ENCODE measurements at regions of chr2 and their contacts with region 1.

Region 1: DNA sequence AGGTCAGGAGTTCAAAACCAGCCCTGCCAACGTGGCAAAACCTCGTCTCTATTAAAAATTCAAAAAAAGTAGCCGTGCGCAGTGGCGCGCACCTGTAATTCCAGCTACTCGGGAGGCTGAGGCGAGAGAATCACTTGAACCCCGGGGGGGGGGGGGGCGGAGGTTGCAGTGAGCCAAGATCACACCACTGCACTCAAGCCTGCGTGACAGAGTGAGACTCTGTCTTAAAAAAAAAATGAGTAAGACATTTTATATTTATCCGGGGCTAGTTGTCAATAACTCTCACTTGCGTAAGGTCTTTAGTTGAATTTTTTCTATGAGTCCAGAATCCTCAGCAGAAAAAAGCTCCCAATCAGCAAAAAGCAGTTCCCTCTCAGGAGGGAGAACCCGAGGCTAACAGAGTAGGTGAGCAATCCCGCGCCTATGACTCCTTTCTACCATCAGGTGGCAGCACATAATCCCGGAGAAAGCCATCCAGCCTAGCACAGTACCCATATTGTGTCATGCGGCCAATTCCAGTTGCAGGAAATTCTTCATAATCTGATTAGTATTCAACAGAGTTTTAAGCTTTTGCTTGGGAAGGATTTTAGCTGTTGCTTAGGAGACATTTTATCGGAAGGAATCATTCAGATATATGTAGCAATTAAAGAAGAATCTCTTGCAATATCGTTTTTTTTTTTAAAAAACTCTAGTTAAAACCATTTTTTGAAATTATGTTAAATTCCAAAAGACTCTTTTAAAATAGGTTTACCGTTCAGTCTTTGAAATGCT is 11.9 kb upstream of the CRYGA start:
- DNase-seq: peak; percentile 61 to 85 (median 66)
- ATAC-seq: peak; percentile 98
- H3K4me3 ChIP-seq: no peak overlapping the region
- H3K27ac ChIP-seq: no peak overlapping the region
- H3K4me1 ChIP-seq: peaks cover 6 to 18% of the 10 kb centered on the region in 2 experiments; a peak in 3 of 5 replicates
- H3K27me3 ChIP-seq: no peaks in the 10 kb centered on the region
- CTCF ChIP-seq: peak; percentile 75 to 83 (median 79)
- EP300 ChIP-seq: no peak
- POLR2A ChIP-seq: no peak
- RAD21 ChIP-seq: peak; percentile 62 to 68

Region 2: GRCh38 chr2:208101716-208102631 is 73.3 kb before region 1 on chr2:
- CTCF ChIA-PET with region 1: no interaction called
- POLR2A ChIA-PET with region 1: interaction called, 3 read pairs
- in situ Hi-C with region 1: no loop called
- intact Hi-C with region 1: loop called (anchors 2 kb)
- DNase-seq: peak in 2 of 4 experiments; percentile 9 to 13
- ATAC-seq: peak; percentile 79
- H3K4me3 ChIP-seq: no peak overlapping the region
- H3K27ac ChIP-seq: no peak overlapping the region
- H3K4me1 ChIP-seq: no peaks in the 10 kb centered on the region
- H3K27me3 ChIP-seq: 0 out of 5 replicates have a peak, but pooled peaks cover 0 to 4% of the 10 kb centered on the region in 2 experiments
- CTCF ChIP-seq: peak; percentile 14 to 62 (median 41); a peak in 5 of 6 replicates
- EP300 ChIP-seq: no peak
- POLR2A ChIP-seq: no peak
- RAD21 ChIP-seq: peak; percentile 56 to 64

Region 3: GRCh38 chr2:208254871-208255556 is 79.8 kb after region 1 on chr2 and contains the start of gene IDH1:
- CTCF ChIA-PET with region 1: interaction called, 3 read pairs
- POLR2A ChIA-PET with region 1: interaction called, 3 read pairs
- in situ Hi-C with region 1: no loop called
- intact Hi-C with region 1: loop called (anchors 1 kb)
- DNase-seq: peak; percentile 91 to 94 (median 92)
- ATAC-seq: peak; percentile 78
- H3K4me3 ChIP-seq: peak within 1 kb of the TSS; percentile 84
- H3K27ac ChIP-seq: peak within 1 kb of the TSS; percentile 80
- H3K4me1 ChIP-seq: peaks cover 8 to 13% of the 10 kb centered on the region in 2 experiments; a peak in 4 of 5 replicates
- H3K27me3 ChIP-seq: no peaks in the 10 kb centered on the region
- CTCF ChIP-seq: peak; percentile 59 to 66 (median 64)
- EP300 ChIP-seq: no peak
- POLR2A ChIP-seq: peak; percentile 65
- RAD21 ChIP-seq: peak; percentile 21 to 31; a peak in 3 of 4 replicates
- polyA plus RNA-seq, gene IDH1: 135 to 194 TPM

Region 4: GRCh38 chr2:208265801-208266552 is 90.7 kb after region 1 on chr2 and contains the start of gene PIKFYVE:
- CTCF ChIA-PET with region 1: no interaction called
- POLR2A ChIA-PET with region 1: no interaction called
- in situ Hi-C with region 1: no loop called
- intact Hi-C with region 1: loop called (anchors 1 kb)
- DNase-seq: peak; percentile 81 to 96 (median 90)
- ATAC-seq: peak; percentile 89
- H3K4me3 ChIP-seq: peak within 1 kb of the TSS; percentile 96
- H3K27ac ChIP-seq: peak within 1 kb of the TSS; percentile 77
- H3K4me1 ChIP-seq: peaks cover 4 to 7% of the 10 kb centered on the region in 2 experiments; a peak in 4 of 5 replicates
- H3K27me3 ChIP-seq: no peaks in the 10 kb centered on the region
- CTCF ChIP-seq: no peak
- EP300 ChIP-seq: peak; percentile 27
- POLR2A ChIP-seq: peak; percentile 79
- RAD21 ChIP-seq: no peak
- polyA plus RNA-seq, gene PIKFYVE: 3.6 to 3.7 TPM

Region 5: DNA sequence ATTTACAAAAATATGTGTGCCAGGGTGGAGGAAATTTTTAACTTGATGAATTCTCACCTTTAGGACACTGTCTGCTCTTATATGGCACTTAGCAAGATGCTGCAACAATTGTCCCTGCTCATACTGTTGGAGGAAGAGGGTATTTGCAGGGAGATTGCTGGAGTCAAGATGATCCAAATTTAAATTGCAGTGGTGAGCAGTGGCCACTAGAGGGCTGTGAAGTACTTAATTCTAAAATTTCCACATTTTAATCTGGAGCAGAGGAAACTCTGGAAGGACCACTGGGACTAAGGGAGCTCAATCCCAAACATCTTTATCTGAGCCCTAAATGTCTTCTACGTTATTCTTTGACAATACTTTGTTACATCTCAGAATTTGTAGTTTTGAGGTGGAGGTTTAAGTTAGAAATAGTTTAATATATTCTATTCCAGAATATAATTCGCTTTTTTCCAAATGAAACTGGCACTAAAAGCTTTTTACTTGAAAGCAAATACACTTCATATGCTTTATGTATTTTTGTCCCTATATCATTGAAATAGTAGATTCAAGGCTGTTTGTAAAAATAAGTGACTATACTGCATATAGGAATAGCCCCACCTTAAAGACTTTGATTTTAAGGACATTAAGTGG is 198.3 kb after region 1 on chr2:
- CTCF ChIA-PET with region 1: no interaction called
- POLR2A ChIA-PET with region 1: no interaction called
- in situ Hi-C with region 1: no loop called
- intact Hi-C with region 1: loop called (anchors 10 kb)
- DNase-seq: peak; percentile 31 to 45 (median 34)
- ATAC-seq: peak; percentile 72
- H3K4me3 ChIP-seq: no peak overlapping the region
- H3K27ac ChIP-seq: no peak overlapping the region
- H3K4me1 ChIP-seq: peaks cover 0 to 12% of the 10 kb centered on the region in 2 experiments; a peak in 2 of 5 replicates
- H3K27me3 ChIP-seq: no peaks in the 10 kb centered on the region
- CTCF ChIP-seq: peak; percentile 46 to 66 (median 64); a peak in 5 of 6 replicates
- EP300 ChIP-seq: no peak
- POLR2A ChIP-seq: no peak
- RAD21 ChIP-seq: peak; percentile 29 to 41; a peak in 2 of 4 replicates